Mammary epithelial cell (primary cell): ENCODE measurements at regions of chr21 and their contacts with region 1.

Region 1: DNA sequence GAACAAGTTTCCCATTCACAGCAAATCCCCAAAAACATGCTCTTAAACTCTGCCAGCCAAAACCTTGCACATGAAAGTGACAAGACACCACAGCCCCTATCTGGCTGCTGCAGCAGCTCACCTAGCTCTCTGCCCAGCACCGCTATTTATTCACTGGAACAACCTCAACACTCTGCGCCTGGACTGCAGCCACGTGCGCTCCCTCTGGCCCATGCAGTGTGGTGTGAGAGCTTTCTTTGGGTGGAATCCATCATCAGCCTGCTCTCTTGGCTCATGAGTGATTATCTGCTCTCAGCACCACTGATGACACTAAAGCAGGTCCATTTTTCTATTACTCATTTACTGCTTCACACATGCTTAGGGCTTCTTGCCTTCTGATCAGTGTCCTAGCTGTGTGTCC is 11.4 kb downstream of the KCNJ6 start:
- DNase-seq: no peak
- H3K4me3 ChIP-seq: no peak overlapping the region
- H3K27ac ChIP-seq: no peak overlapping the region
- H3K4me1 ChIP-seq: no peaks in the 10 kb centered on the region
- H3K27me3 ChIP-seq: no peaks in the 10 kb centered on the region
- CTCF ChIP-seq: no peak

Region 2: DNA sequence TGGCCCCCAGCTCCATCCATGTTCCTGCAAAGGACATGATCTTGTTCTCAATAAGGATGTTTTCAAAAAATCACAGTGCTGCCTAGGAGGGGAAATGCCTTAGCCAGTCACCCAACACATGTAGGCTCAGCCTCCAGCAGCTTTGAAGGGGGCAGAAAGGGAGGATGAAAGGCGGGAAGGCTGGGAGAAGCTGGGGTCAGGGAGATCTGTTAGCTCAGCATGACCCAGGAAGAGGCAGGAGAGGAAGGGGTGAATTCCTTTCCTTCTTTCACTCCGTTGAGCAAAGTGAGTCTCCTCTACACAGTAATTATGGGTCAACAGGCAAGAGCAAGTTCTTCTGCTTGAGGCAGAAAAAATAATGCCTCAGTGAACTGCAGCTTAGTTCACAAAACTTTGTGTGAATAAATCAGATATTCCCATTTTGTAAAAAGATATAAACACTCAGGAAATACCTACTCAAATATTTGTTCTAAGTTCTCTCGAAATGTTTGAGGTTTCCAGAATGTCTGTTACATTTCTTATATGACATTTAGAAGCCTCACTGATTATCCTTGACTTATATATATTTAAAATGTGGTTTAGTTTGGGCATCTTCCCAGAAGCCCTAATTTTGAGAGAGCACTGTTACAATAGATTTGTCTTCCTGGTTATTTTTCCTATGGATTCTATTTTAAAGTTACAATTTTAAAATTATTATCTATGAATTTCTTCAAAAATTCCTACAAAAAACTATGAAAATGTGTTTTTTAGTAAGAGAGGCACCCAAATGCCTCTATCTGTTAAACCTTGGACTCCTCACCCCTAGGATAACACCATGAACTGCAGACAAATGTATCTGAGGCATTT is 105.4 kb before region 1 on chr21:
- CTCF ChIA-PET with region 1: no interaction called
- dilution Hi-C with region 1: loop called (anchors 5 kb)
- in situ Hi-C with region 1: no loop called
- intact Hi-C with region 1: no loop called
- DNase-seq: no peak
- H3K4me3 ChIP-seq: no peak overlapping the region
- H3K27ac ChIP-seq: no peak overlapping the region
- H3K4me1 ChIP-seq: no peaks in the 10 kb centered on the region
- H3K27me3 ChIP-seq: no peaks in the 10 kb centered on the region
- CTCF ChIP-seq: no peak